ENCODE measurements at regions of chr17 and their contacts with region 1.

Region 1: GRCh38 chr17:34361478-34362061 is 1.5 kb downstream of the CCL1 start:
- DNase-seq: peak; percentile 95
- ATAC-seq: peak; percentile 95

Region 2: GRCh38 chr17:34314279-34314678 is 47.3 kb before region 1 on chr17:
- intact Hi-C with region 1: loop called (anchors 5 kb)
- DNase-seq: no peak
- ATAC-seq: peak; percentile 74